Transverse colon (tissue), 4 donors: ENCODE measurements at regions of chr15 and their contacts with region 1.

Region 1: DNA sequence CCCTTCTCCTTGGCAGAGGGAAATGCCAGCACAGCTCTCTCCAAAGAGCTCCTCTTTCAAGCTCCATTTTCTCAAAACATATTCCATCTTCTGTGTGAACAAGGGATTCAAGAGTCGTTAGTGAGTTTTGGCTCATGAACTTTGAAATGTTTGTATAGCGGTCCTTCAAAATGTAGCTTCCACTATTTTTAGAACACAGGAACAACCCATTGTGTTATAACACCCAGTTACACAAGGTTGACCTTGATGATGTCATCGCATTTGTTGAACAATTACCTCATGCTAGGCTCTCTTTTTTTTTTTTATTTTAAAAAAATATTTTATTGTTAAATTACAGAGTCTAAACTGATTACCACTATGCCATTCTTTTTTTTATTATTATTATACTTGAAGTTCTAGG is 251.7 kb downstream of the THSD4 start:
- DNase-seq: no peak
- H3K4me3 ChIP-seq: no peak overlapping the region
- H3K27ac ChIP-seq: no peak overlapping the region
- H3K4me1 ChIP-seq: peaks cover 0 to 14% (median 2%) of the 10 kb centered on the region in 4 donors
- H3K27me3 ChIP-seq: no peaks in the 10 kb centered on the region
- CTCF ChIP-seq: no peak
- EP300 ChIP-seq: no peak
- POLR2A ChIP-seq: no peak

Region 2: GRCh38 chr15:70770863-70771262 is 596.1 kb before region 1 on chr15:
- in situ Hi-C with region 1: no loop called
- intact Hi-C with region 1: loop called (anchors 5 kb)
- DNase-seq: no peak
- H3K4me3 ChIP-seq: no peak overlapping the region
- H3K27ac ChIP-seq: no peak overlapping the region
- H3K4me1 ChIP-seq: peaks cover 0 to 15% (median 1%) of the 10 kb centered on the region in 4 donors
- H3K27me3 ChIP-seq: no peaks in the 10 kb centered on the region
- CTCF ChIP-seq: no peak
- EP300 ChIP-seq: no peak
- POLR2A ChIP-seq: no peak